GM13976 (cell line): ENCODE measurements at regions of chr10 and their contacts with region 1.

Region 1: DNA sequence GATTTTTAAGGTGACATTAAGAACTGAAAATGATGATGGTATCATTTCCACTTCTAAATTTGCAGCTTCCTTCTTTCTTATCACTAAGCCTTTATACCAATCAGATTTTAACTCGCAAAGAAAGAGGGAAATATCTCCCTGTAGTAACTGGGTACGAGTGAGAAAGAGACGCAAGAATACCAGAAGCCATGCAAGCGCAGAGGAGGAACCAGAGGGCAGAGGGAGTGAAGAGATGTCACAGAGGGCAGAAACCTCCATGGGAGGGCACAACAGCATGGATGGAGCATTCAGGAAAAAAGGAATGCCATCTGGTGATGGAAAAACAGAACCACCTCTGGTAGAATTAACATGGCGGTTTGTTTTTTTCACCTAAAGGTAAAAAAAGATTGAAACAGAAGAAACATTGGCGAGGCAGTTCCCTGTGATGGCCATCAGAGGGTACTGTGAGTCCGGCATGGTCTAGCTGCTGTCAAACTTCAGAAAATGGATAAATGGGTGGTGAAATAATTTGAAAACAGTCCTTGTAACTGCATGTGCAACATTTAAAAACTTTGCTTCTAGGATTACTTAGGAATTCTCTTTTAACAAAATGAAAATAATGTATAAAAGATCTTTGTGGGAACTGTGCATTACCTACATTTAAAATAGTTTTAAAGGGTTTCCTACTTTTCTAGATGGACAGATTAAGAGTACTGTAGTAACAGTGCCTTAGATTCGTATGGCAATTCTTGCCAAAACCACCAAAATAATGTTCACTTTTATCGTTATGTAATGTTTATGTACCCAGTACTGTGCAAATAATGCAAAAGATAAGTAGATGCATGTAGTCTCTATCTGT is 91.8 kb downstream of the ARHGAP12 start:
- DNase-seq: peak; percentile 37
- CTCF ChIP-seq: peak; percentile 44

Region 2: DNA sequence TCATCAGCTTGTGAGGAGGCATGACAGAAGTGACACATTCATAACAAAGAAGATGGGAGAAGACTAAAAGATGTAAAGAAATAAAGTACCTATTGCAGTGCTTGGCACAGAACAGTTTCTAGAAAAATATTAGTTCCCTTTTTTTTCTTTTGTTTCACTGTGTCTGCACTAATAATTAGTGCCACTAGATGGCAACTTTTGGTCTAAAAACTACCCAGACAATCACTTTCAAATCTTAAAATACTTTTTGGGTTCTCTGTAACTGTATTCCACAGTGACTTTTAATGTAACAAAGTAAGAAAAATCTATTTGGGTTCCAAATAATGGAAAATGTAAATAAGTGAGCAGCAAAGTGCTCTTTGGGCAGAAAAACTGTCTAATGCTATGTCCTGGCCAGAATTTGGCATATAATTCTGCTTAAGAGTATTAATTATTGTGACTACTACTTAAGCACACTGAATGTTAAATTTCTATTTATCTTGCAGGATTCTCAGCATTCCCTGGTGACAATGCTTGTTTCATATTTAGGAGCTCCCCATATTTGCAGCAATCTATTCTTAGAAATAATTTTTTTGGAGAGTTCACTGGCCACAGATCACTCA is 354.2 kb after region 1 on chr10:
- in situ Hi-C with region 1: loop called (anchors 25 kb)
- DNase-seq: peak; percentile 52
- CTCF ChIP-seq: peak; percentile 72